AG04449 (cell line): ENCODE measurements at regions of chr12 and their contacts with region 1.

Region 1: DNA sequence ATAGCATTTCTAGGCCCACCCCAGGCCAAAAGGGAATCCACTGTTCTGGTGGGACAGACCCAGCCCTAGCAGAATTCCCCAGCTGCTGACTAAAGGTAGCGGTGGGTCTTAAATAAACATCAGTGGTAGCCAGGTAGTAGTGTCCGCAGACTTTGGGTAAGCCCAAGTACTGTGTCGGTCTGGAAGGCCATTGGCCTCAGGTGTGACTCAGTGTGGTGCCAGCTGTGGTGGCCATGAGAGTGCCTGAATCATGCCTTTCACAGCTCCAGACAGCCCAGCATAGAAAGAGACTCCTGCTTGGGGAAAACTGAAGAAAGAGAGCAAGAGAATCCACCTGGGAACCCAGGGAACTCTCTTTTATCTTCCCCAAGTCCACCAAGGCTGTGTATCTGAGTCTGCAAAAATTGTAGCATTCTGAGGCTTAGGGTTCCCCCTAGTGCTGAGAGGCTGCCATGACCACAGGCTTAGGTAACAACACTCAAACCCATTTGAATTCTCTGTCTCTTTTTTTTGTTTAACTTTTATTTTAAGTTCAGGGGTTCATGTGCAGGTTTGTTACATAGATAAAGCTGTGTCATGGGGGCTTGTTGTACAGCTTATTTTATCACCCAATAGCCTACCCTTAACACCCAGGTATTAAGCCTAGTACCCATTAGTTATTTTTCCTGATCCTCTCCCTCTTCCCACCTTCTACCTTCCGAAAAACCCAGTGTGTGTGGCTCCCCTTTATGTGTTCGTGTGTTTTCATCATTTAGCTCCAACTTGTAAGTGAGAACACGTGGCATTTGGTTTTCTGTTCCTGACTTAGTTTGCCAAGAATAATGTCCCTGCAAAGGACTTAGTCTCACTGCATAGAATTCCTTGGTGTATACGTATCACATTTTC is 16.7 kb upstream of the CD163L1 start:
- DNase-seq: peak; percentile 12
- H3K4me3 ChIP-seq: no peak overlapping the region
- CTCF ChIP-seq: peak; percentile 85

Region 2: DNA sequence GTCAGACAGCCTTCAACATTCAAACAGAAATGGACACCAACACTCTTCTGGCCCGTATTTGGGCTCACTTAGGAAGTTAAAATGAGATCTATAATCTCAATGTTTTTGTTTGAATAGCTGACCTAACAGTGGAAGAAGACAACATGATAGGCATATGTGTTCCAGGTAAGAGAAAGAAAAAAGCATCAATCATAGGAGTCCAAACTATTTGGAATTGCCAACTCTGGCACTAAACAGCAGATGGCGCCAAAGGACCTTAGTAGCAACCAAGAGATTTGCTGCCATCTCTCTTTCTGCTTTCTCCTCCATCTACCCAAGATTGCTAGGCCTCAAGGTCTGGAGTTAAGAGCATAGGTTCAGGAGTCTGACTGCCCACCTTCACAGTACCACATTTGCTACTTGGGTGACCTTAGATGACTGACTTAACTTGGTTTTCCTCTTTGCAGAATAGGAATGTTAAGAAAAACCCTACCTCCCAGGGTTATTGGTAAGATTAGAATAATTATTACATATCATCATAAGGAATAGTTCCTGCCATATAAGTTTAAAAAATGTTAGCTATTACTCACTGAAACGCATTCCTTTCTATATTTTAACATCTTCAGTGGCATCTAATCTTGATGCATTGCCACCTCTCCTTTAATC is 240.9 kb before region 1 on chr12:
- CTCF ChIA-PET with region 1: interaction called, 54 read pairs
- POLR2A ChIA-PET with region 1: no interaction called
- DNase-seq: peak; percentile 37
- H3K4me3 ChIP-seq: no peak overlapping the region
- CTCF ChIP-seq: peak; percentile 69

Region 3: DNA sequence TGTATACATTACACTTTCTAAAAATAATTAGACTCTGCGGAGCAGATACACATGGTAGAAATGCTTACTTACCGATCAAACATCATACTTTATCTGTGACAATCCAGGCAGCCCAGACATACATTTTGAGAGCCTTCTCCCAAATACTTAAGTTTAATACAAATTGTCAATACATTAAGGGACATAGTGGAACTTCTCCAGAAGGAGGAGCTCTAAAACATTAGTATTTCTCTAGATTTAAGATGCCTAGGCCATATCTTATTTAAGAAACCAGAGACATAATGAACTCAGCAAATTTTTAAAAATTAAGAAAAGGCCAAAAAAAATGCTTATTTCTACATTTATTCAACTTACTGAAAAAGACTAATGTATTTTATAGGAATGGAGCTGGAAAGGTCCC is 140.7 kb before region 1 on chr12:
- CTCF ChIA-PET with region 1: interaction called, 10 read pairs
- POLR2A ChIA-PET with region 1: no interaction called
- DNase-seq: no peak
- H3K4me3 ChIP-seq: no peak overlapping the region
- CTCF ChIP-seq: no peak

Region 4: DNA sequence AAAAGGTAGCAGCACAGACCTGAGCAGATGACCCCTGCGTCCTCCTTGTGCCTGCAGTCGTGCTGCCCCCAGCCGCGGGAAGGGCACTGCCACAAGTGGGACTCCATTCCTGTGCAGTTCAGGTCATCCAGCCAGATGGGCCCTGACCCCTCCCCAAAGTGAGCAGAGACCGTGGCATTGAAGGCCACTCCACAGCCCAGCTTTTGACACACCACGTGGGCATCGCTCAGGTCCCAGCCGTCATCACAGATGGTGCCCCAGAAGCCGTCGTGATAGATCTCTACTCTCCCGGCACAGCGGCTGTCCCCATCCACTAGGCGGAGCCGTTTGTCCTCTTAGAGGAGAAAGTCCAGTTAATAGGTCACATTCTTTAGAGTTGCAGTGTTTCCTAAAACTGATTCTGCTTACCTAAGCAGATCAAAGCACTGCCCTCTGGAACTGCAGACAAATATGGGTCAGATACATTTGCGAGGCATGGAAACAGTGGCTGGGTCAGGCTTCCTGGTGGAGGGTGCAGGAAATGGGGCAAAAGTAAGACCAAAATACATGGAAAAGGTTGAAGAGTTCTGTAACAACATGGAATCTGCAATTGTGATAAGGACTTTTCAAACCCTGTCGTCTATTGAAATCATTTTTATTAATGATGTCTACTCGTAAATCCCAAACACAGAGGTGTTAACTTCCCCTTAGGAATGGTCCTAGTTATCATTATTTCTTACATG is 86.0 kb before region 1 on chr12:
- CTCF ChIA-PET with region 1: interaction called, 19 read pairs
- POLR2A ChIA-PET with region 1: no interaction called
- DNase-seq: no peak
- H3K4me3 ChIP-seq: no peak overlapping the region
- CTCF ChIP-seq: peak; percentile 60

Region 5: GRCh38 chr12:7439579-7440505 is 20.8 kb before region 1 on chr12:
- CTCF ChIA-PET with region 1: interaction called, 15 read pairs
- POLR2A ChIA-PET with region 1: no interaction called
- DNase-seq: no peak
- H3K4me3 ChIP-seq: peak overlapping the region; percentile 55
- CTCF ChIP-seq: no peak

Region 6: DNA sequence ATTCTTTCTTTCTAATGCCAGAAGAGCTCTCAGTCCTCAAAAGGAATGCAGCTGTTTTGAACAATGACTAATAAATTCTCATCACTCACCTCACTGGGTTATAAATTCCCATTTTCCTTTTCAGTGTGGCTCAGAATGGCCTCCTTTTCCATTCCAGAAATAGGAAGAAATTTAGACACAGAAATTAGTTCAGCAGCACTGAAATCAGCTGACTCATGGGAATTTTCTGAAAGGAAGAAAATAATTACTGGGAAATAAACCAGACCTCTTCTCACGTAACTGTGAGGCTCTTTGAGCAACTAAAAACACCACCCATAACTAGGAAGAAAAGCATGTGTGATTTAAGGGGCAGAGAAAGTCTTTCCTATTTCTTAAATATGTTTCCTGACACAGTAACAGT is 19.2 kb after region 1 on chr12:
- CTCF ChIA-PET with region 1: interaction called, 20 read pairs
- POLR2A ChIA-PET with region 1: no interaction called
- DNase-seq: no peak
- H3K4me3 ChIP-seq: no peak overlapping the region
- CTCF ChIP-seq: no peak

Region 7: GRCh38 chr12:7638760-7639555 is 178.3 kb after region 1 on chr12:
- CTCF ChIA-PET with region 1: interaction called, 28 read pairs
- POLR2A ChIA-PET with region 1: no interaction called
- DNase-seq: peak; percentile 12
- H3K4me3 ChIP-seq: no peak overlapping the region
- CTCF ChIP-seq: peak; percentile 63